MCF 10A (cell line): ENCODE measurements at regions of chr1 and their contacts with region 1.

Region 1: DNA sequence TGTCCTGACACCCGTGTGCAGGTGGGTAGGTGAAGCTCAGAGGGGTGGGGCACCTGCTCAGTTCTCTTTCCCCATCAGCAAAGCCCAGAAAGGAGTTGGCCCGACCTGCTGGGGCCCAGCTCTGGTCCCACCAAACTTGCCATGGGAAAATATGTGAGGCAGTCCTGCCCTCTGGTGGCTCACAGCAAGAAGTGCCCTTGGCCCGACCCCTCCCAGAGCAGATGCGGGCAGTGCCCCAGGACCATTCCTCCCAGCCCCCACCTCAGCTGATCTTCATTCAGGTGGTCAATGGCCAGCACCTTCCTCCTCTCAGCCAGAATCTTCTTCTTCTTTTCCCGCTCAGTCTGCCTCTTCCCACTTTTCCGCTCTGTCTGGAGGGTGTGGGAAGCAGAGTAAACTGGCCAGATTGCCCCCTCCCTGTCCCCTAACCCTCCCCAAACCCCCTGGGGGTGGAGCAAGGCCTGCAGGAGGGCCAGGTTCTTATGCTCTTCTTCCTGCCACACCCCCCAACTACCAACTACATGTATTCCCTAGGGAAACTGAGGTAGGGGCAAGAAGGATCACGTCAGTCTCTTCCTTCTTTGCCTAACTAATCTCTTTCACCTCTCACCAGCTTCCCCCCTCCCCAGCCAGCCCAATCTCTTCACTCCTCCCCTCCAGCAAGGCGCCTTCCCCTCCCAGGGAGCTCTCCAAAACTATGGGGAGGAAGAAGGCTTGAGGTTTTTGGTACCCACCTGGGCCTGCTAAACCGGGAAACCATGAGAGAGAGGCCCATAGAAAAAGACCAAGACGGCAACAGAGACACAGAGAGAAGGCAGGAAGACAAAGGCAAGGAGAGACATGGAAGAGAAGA is 15.6 kb downstream of the TNNT2 start:
- DNase-seq: peak; percentile 82
- H3K4me3 Mint-ChIP-seq: no peak overlapping the region
- H3K27ac Mint-ChIP-seq: no peak overlapping the region
- H3K4me1 Mint-ChIP-seq: peaks cover 24% of the 10 kb centered on the region
- H3K27me3 Mint-ChIP-seq: peaks cover 8% of the 10 kb centered on the region
- CTCF ChIP-seq: peak; percentile 100

Region 2: DNA sequence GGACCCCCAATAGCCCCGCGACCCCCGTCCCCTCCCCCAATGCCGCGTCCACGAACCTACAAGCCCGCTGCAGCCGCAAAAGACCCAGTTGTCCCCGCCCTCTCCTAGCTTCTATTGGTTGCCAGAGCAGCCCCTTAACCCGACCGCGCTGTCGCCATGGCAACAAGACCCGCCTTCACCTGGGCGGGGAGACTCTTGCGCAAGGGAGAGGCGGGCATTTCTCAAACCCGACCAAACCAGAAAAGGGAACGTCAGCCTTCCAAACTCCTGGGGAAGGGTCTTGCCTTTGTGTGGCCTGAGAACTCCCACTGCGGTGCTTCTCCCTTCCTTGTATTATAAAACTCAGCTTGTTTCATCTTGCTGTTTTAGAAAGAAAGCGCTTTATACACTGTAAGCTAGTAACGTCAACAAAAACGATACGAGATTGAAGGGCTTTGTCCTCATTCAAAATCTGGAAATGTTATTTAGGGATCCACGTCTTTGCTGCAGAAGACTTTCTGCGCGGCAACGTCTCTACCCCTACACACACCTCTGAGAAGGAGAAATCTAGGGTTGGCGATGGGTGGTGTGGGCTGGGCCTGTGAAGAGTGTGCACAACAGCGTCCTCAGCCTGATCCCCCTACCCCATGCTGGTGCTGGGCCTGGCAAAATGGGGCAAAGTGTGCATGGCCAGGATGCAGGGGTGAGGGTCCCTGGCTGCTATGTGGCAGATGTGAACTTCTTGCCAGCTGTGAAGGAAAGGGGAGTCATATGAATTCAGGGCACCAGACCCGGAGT is 207.3 kb before region 1 on chr1 and contains the start of gene TMEM9:
- CTCF ChIA-PET with region 1: interaction called, 87 read pairs
- POLR2A ChIA-PET with region 1: no interaction called
- intact Hi-C with region 1: loop called (anchors 1 kb)
- DNase-seq: peak; percentile 99
- H3K4me3 Mint-ChIP-seq: peak within 1 kb of the TSS; percentile 82
- H3K27ac Mint-ChIP-seq: peak within 1 kb of the TSS; percentile 14
- H3K4me1 Mint-ChIP-seq: peaks cover 5% of the 10 kb centered on the region
- H3K27me3 Mint-ChIP-seq: peaks cover 12% of the 10 kb centered on the region
- CTCF ChIP-seq: no peak
- total RNA-seq, gene TMEM9: 67.2 and 71.7 TPM in 2 replicates

Region 3: DNA sequence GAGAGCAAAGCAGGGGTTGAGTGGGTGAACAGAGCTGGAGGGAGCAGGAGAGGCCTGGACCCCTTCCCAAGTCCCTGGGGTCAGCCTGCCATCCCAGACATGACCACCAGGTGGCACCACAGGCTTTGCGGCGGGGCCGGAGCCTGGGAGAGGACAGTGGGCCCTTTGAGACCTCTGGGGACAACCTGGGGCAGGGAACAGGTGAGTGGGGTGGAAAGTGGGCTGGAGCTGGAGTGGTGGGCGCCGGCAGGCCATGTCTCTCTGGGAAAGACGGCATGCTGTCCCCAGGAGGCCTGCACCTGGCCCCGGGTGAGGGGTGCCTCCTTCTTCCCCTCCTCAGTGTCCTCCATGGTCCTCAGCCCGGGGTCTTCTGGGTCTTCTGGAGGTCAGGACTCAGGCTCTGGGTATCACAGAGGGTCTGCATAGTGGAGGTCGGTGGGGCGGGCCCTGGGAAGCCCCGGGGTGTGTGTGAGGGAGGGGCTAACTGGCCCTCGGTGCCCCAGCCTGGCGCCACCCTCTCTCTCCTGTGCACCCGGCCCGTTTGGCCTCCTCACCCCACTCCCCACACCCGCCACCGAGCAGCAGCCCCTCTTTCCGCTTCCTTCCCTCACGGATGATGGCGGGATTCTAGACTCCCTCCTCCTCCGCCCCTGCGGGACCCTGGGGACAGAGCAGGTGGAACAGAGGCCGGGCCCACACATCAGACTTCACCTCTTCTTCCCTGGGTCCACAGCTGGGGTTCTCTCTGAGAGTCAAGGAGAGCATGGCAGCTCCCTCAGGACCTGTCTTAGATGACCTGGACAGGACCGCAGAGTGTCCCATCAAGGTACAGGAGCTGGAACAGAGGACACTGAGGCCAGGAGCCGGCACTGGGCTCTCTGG is 107.0 kb before region 1 on chr1:
- CTCF ChIA-PET with region 1: interaction called, 550 read pairs
- POLR2A ChIA-PET with region 1: interaction called, 23 read pairs
- intact Hi-C with region 1: loop called (anchors 1 kb)
- DNase-seq: peak; percentile 80
- H3K4me3 Mint-ChIP-seq: no peak overlapping the region
- H3K27ac Mint-ChIP-seq: no peak overlapping the region
- H3K4me1 Mint-ChIP-seq: no peaks in the 10 kb centered on the region
- H3K27me3 Mint-ChIP-seq: no peaks in the 10 kb centered on the region
- CTCF ChIP-seq: peak; percentile 100

Region 4: DNA sequence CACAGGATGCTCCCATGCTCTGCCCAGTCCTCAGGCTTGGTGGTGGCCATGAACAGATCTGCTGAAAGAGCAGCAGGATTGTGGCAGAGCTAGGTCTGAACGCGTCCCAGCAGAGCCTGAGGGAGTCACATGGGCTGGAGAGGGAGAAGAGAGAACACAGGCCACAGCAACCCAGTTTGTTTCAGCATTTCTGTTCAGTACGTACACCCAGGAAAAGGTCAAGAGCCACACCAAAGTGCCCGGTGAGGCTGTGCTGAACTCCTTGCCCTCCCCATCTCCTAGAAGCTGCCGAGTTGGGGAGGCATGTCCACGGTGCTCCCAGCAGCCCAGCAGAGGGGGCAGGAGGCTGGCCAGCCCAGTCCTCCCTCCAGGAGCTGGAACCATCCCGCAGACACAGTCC is 73.1 kb before region 1 on chr1:
- CTCF ChIA-PET with region 1: interaction called, 88 read pairs
- POLR2A ChIA-PET with region 1: interaction called, 159 read pairs
- intact Hi-C with region 1: no loop called
- DNase-seq: peak; percentile 64
- H3K4me3 Mint-ChIP-seq: peak overlapping the region; percentile 15
- H3K27ac Mint-ChIP-seq: peak overlapping the region; percentile 83
- H3K4me1 Mint-ChIP-seq: peaks cover 28% of the 10 kb centered on the region
- H3K27me3 Mint-ChIP-seq: no peaks in the 10 kb centered on the region
- CTCF ChIP-seq: peak; percentile 7

Region 5: DNA sequence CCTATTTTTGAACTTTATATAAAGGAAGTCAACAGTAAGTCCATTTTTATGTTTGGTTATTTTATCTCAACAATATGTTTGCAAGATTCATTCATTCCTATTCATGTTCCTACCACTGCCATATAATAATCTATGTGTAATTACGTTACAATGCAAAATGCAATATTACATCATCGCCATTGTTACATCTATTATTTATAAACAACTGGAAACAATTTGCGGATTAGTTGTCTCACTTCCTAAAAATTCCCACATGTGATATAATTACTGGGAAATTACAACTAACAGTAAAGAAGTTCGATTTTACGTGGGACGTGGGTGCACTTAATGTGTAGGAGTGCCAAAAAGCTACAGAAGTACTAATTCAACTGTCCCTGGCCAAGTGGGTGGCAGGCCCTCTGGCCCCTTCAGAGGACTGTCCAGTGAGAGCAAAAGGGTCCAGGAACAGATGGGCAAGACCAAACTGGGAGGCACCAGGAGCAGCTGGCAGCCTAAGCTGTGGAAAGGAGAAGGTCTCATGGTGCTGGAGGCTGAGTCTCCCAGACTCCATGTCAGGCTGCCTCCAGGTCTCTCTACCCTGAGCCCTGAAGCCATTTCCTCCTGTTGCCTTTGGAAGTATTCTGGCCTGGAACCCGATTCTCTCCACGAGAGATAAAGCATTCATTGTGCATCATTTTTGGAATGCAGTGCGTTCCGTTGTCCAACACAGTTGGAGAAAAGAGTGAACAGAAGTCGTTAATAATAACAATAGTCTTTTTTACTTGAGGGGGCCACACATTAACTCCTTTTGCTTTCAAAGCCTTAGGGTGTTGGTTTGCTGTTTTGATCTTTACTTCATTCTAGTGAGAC is 27.3 kb before region 1 on chr1:
- CTCF ChIA-PET with region 1: interaction called, 22 read pairs
- POLR2A ChIA-PET with region 1: interaction called, 3 read pairs
- intact Hi-C with region 1: no loop called
- DNase-seq: no peak
- H3K4me3 Mint-ChIP-seq: no peak overlapping the region
- H3K27ac Mint-ChIP-seq: no peak overlapping the region
- H3K4me1 Mint-ChIP-seq: peaks cover 11% of the 10 kb centered on the region
- H3K27me3 Mint-ChIP-seq: no peaks in the 10 kb centered on the region
- CTCF ChIP-seq: no peak

Region 6: GRCh38 chr1:201385299-201385891 is 23.5 kb after region 1 on chr1:
- CTCF ChIA-PET with region 1: interaction called, 90 read pairs
- POLR2A ChIA-PET with region 1: interaction called, 3 read pairs
- intact Hi-C with region 1: no loop called
- DNase-seq: peak; percentile 80
- H3K4me3 Mint-ChIP-seq: no peak overlapping the region
- H3K27ac Mint-ChIP-seq: no peak overlapping the region
- H3K4me1 Mint-ChIP-seq: peaks cover 19% of the 10 kb centered on the region
- H3K27me3 Mint-ChIP-seq: no peaks in the 10 kb centered on the region
- CTCF ChIP-seq: peak; percentile 99

Region 7: DNA sequence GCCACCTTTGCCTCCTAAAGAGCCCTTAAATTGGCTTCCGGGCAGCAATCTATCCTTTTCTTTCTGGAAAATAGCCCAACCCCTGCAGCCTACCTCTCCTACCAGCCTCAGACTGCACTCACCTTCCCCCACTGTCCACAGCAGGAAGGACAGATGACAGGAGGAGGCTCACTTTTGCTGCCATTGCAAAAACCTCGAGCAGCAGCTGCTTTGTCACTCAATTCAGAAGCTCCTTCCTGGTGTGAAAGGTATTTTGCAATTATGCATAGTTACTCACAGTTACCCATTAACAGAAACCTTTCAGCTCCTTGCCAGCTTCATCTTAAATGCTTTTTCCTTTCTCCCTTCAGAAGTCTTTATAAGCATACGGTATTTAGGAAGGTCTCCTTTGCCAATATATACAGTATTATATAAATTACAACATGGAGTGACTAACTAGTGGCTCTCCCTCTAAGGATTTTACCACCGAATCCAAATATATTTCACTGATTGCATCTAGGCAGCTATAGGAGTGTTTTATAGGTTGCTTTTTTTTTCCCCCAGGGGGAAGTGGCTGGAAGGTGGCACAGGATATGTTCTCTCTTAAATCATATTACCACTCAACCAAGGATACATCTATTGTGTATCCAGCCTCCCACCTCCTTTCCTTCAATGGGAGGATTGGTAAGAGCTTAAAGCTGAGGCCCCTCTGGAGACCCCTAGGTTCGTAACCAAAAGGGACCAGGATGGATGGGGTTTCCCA is 325.0 kb after region 1 on chr1:
- CTCF ChIA-PET with region 1: no interaction called
- POLR2A ChIA-PET with region 1: no interaction called
- intact Hi-C with region 1: no loop called
- DNase-seq: peak; percentile 64
- H3K4me3 Mint-ChIP-seq: no peak overlapping the region
- H3K27ac Mint-ChIP-seq: peak overlapping the region; percentile 17
- H3K4me1 Mint-ChIP-seq: peaks cover 13% of the 10 kb centered on the region
- H3K27me3 Mint-ChIP-seq: no peaks in the 10 kb centered on the region
- CTCF ChIP-seq: no peak